Uterus (tissue), 4 donors: ENCODE measurements at regions of chr3 and their contacts with region 1.

Region 1: DNA sequence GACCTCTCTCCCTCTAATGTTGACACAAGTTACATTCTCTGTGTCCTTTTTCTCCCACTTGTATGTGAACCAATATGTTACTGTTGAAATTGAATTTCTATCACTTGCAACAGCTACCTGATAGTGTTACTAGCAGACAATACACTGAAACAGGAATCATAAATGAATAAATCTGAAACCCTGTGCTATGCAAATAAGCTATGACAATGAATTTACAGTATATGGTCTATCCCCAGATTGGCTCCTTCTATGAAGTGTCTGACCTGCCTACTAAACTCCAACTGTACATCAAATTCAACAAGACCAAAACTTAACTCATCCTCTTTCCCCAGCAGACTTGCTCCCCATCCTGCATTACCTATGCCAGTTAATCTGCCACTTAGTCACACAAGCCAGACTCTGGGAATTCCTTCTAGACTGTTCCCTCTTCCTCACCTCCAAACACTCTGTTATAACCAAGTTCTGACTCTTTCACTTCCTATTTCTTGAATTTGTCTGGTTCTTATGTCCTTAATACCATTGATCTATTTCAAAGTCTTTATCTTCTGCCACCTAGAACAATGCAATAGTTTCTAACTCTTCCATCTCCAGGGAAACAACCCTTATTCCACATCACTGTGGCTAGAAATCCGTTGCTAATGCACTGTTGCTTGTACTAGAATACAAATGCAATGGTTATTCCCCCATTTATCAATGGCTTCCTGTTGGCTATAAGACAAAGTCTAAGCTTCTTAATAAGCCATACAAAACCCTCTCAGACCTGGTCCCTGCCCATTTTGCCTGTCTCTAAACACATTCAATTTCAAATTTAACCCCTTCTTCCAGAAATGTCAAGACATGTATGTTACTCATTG is 13.4 kb upstream of the ZNF639 start:
- DNase-seq: no peak
- H3K4me3 ChIP-seq: no peak overlapping the region
- H3K27ac ChIP-seq: no peak overlapping the region
- H3K4me1 ChIP-seq: no peaks in the 10 kb centered on the region
- H3K27me3 ChIP-seq: no peaks in the 10 kb centered on the region
- CTCF ChIP-seq: no peak
- POLR2A ChIP-seq: no peak

Region 2: DNA sequence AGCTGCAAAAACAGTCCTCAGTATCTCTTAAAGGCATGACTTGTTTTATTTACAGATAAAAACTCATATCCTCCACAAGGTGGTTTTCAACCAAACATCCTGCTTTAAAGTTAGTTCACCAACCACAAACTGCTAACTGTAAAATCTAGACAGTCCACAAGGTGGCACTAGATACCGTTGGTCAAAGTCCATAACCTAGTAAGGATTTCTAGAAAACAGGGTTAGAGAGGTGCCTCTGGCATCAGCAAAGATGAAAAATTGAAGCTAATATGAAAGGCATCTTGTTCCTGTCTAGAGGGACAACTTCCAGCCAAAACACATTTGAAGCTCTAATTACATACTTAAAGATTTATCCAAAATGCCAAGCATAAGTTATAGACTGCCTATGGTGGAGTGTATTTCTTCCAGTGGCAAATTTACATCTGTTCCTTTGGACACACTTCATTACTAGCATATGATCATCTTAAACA is 293.9 kb before region 1 on chr3:
- intact Hi-C with region 1: loop called (anchors 10 kb)
- DNase-seq: peak; percentile 32 to 61
- H3K4me3 ChIP-seq: no peak overlapping the region
- H3K27ac ChIP-seq: no peak overlapping the region
- H3K4me1 ChIP-seq: no peaks in the 10 kb centered on the region
- H3K27me3 ChIP-seq: no peaks in the 10 kb centered on the region
- CTCF ChIP-seq: peak; percentile 84 to 88 (median 87)
- POLR2A ChIP-seq: no peak

Region 3: GRCh38 chr3:179100652-179101051 is 208.8 kb before region 1 on chr3:
- intact Hi-C with region 1: loop called (anchors 10 kb)
- DNase-seq: peak in 1 of 2 donors; percentile 19
- H3K4me3 ChIP-seq: no peak overlapping the region
- H3K27ac ChIP-seq: no peak overlapping the region
- H3K4me1 ChIP-seq: peaks cover 0 to 6% of the 10 kb centered on the region in 2 donors
- H3K27me3 ChIP-seq: no peaks in the 10 kb centered on the region
- CTCF ChIP-seq: no peak
- POLR2A ChIP-seq: no peak

Region 4: DNA sequence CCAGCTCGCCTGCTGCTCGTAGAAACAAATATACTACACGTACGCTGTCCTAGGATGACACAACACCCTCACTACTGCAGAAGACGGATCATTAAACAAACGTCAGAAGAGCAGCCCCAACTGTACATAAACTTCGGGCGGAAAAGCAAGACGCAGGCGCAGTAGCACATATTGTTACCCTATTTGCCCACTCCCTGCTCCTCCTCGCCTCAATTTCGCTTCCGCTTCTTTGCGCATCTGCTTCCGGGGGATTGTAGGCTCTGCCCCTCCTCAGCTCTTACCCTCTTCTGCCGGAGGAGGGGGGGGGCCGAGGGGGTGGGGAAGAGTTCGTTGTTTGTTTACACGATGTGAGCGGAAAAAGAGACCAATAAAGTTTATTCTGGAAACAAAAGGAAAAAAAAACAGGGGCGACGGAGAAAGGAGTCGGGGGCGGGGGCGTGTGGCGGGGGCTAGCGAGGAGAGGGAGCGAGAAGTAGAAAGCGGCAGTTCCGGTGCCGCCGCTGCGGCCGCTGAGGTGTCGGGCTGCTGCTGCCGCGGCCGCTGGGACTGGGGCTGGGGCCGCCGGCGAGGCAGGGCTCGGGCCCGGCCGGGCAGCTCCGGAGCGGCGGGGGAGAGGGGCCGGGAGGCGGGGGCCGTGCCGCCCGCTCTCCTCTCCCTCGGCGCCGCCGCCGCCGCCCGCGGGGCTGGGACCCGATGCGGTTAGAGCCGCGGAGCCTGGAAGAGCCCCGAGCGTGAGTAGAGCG is 161.4 kb before region 1 on chr3 and contains the start of gene PIK3CA:
- intact Hi-C with region 1: no loop called
- DNase-seq: peak; percentile 93 to 97
- H3K4me3 ChIP-seq: peak within 1 kb of the TSS; percentile 67 to 88
- H3K27ac ChIP-seq: peak within 1 kb of the TSS; percentile 95 to 98
- H3K4me1 ChIP-seq: peaks cover 0 to 17% of the 10 kb centered on the region in 2 donors
- H3K27me3 ChIP-seq: no peaks in the 10 kb centered on the region
- CTCF ChIP-seq: peak in 1 of 4 experiments; percentile 8
- POLR2A ChIP-seq: peak; percentile 47 to 82
- total RNA-seq, gene PIK3CA: 12.6 to 65.2 (median 36.3) TPM